Endothelial cell of umbilical vein (primary cell): ENCODE measurements at regions of chr9 and their contacts with region 1.

Region 1: DNA sequence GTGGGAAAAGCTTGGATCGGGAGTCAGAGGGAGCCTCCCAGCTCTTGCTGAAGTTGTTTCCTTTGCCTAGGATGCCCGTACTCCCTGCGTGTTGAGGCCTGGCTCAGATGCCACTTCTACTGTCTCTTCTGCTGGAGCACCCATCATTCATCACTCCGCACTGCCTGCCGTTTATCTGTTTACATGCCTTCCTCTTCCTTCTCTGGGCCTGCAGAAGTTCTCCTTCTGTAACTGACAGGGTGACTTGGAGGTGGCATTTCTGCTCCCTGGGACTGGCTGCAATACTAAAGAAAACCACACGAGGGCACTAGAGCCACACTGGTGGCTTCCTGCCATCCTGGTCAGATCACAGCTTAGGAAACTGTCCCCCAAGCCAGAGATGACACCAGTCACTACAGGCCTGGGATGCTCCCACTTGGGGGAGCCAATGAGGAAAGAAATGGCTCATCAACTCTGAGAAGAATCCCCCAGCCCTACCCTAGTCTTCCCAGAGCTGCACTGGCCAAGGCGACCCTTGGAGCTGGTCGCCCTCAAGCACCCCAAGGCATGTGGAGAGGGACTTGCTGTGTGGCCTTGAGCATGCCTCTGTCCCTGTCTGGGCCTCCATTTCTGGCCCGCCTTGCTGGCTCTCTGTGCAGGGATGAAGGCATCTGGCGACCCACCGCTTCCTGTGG is 9.7 kb upstream of the SLC25A51 start:
- DNase-seq: peak; percentile 84
- H3K4me3 ChIP-seq: no peak overlapping the region
- H3K27ac ChIP-seq: no peak overlapping the region
- H3K4me1 ChIP-seq: peaks cover 17% of the 10 kb centered on the region
- H3K27me3 ChIP-seq: no peaks in the 10 kb centered on the region
- CTCF ChIP-seq: peak; percentile 89 to 92
- POLR2A ChIP-seq: no peak

Region 2: DNA sequence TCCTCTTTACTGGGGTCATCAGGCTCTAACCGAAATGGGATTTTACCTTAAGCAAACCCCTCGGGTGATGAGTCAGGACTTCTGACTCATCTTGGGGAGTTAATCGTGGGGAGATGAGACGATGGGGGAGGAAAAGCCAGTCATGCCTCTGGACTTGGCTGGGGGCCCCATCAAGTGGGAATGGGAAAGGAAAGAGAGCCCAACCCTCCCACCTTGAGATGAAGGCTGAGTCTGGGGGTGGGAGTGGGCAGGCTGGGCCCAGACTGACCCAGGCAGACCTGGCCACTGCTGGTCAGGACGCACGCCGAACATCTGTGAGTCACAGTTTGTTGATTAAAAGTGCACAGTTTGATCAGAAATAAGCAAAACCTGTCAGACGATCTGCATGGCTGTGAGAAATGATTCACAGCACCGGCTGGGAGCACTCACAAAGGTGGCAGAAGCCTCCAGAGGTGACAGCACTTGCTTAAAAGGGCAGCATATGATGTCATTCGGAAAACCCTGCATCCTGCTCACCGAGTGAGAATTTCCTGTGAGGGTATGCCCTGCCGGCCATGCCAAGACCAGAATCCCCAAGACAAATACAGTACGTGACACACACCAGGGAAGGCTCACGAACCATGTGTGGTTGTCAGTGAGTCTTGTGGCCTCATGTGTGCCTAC is 40.3 kb after region 1 on chr9:
- CTCF ChIA-PET with region 1: interaction called, 8 read pairs
- POLR2A ChIA-PET with region 1: no interaction called
- dilution Hi-C with region 1: no loop called
- intact Hi-C with region 1: loop called (anchors 1 kb)
- DNase-seq: peak; percentile 97
- H3K4me3 ChIP-seq: no peak overlapping the region
- H3K27ac ChIP-seq: peak overlapping the region; percentile 71
- H3K4me1 ChIP-seq: peaks cover 21% of the 10 kb centered on the region
- H3K27me3 ChIP-seq: no peaks in the 10 kb centered on the region
- CTCF ChIP-seq: no peak
- POLR2A ChIP-seq: peak; percentile 46

Region 3: GRCh38 chr9:38017149-38017884 is 103.7 kb after region 1 on chr9:
- CTCF ChIA-PET with region 1: interaction called, 16 read pairs
- POLR2A ChIA-PET with region 1: no interaction called
- dilution Hi-C with region 1: no loop called
- intact Hi-C with region 1: loop called (anchors 2 kb)
- DNase-seq: no peak
- H3K4me3 ChIP-seq: no peak overlapping the region
- H3K27ac ChIP-seq: peak overlapping the region; percentile 34
- H3K4me1 ChIP-seq: peaks cover 57% of the 10 kb centered on the region
- H3K27me3 ChIP-seq: no peaks in the 10 kb centered on the region
- CTCF ChIP-seq: peak in 1 of 2 donors; percentile 11
- POLR2A ChIP-seq: no peak

Region 4: GRCh38 chr9:38061326-38061977 is 147.8 kb after region 1 on chr9:
- CTCF ChIA-PET with region 1: interaction called, 82 read pairs
- POLR2A ChIA-PET with region 1: no interaction called
- dilution Hi-C with region 1: no loop called
- intact Hi-C with region 1: no loop called
- DNase-seq: no peak
- H3K4me3 ChIP-seq: no peak overlapping the region
- H3K27ac ChIP-seq: no peak overlapping the region
- H3K4me1 ChIP-seq: peaks cover 65% of the 10 kb centered on the region
- H3K27me3 ChIP-seq: no peaks in the 10 kb centered on the region
- CTCF ChIP-seq: no peak
- POLR2A ChIP-seq: no peak

Region 5: DNA sequence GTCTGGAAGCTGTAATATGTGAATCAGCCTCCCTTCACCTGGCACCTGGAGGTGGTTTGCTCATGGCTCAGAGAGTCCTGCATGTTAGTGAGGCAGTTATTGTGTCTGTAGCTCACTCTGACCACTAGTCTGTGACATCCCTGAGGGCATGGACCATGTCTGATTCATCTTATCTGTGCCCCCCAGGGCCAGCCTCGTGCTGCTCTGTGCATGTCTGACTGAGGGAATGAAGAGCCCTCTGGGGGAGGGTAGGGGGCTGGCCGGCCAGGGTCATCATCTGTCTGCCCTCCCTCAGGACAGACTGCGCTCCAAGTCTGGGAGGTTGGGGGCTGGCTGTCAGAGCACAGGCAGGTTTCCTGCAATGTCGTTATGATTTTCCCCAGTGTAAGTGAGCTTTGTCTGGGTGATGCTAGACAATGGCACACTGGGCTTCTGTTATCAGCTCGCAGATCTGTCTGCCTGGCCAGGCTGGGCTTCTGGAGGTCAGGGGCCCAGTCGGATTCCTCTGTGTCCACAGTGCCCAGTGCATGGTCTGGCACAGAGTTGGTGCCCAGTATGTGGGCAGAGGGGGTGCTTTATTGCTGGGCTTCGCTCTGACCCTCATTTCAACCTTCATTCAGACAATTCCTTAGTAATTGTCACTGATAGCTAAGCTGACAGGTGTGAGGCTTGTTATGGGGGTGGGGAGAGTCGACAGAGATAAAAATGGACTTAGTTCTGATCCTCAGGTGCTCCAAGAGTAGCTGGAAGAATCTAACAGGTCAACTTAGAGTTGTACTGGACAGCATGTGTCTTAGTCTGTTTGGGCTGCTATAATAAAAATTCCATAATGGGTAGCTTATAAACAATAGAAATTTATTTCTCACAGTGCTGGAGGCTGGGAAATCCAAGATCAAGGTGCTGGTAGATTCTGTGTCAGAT is 241.1 kb after region 1 on chr9:
- CTCF ChIA-PET with region 1: interaction called, 130 read pairs
- POLR2A ChIA-PET with region 1: no interaction called
- dilution Hi-C with region 1: no loop called
- intact Hi-C with region 1: no loop called
- DNase-seq: no peak
- H3K4me3 ChIP-seq: no peak overlapping the region
- H3K27ac ChIP-seq: no peak overlapping the region
- H3K4me1 ChIP-seq: no peaks in the 10 kb centered on the region
- H3K27me3 ChIP-seq: peaks cover 0 to 4% of the 10 kb centered on the region in 2 experiments
- CTCF ChIP-seq: no peak
- POLR2A ChIP-seq: no peak

Region 6: DNA sequence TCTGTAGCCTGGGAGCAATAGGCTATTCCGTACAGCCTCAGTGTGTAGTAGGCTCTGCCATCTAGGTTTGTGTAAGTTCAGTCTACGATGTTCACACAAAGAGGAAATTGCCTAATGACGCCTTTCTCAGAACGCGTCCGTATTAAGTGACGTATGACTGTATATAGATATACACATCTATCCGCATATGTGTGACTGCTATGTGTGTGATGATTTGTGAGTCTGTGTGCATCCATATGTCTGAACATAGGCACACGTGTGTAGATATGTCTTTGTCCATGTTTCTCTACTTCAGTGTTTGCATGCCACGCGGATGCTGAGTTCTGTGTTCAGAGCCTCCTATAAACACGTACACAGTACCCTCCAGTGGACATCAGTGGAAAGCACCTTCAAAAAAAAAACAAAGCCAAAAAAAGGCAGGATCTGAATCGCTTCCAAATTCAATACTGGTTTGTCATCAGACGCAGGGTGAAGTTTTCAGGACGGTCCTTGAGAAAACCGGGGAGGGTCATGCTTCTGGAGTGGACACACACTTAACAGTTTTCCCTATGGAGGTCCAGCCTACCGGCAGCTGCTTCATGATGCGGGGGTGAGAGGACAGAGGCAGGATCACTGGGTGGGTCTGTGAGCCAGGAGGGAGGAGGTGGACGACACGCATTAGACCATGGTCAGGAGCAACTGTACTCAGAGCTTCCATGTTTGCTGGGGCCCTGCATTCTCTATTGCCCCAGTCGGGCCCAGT is 449.4 kb after region 1 on chr9:
- CTCF ChIA-PET with region 1: interaction called, 16 read pairs
- POLR2A ChIA-PET with region 1: no interaction called
- dilution Hi-C with region 1: no loop called
- intact Hi-C with region 1: loop called (anchors 1 kb)
- DNase-seq: peak; percentile 66
- H3K4me3 ChIP-seq: no peak overlapping the region
- H3K27ac ChIP-seq: no peak overlapping the region
- H3K4me1 ChIP-seq: no peaks in the 10 kb centered on the region
- H3K27me3 ChIP-seq: peaks cover 2 to 3% of the 10 kb centered on the region in 2 experiments
- CTCF ChIP-seq: peak; percentile 47 to 55
- POLR2A ChIP-seq: no peak